Activated CD8-positive, alpha-beta T cell treated with anti-CD3 and anti-CD28 coated beads for 36 hours (primary cell): ENCODE measurements at regions of chr13 and their contacts with region 1.

Region 1: GRCh38 chr13:42466123-42466522 is 107.8 kb upstream of the TNFSF11 start:
- DNase-seq: no peak
- ATAC-seq: no peak
- H3K4me3 Mint-ChIP-seq: no peak overlapping the region
- H3K27ac Mint-ChIP-seq: no peak overlapping the region
- H3K4me1 Mint-ChIP-seq: peaks cover 23% of the 10 kb centered on the region
- H3K27me3 Mint-ChIP-seq: no peaks in the 10 kb centered on the region
- CTCF ChIP-seq: no peak

Region 2: DNA sequence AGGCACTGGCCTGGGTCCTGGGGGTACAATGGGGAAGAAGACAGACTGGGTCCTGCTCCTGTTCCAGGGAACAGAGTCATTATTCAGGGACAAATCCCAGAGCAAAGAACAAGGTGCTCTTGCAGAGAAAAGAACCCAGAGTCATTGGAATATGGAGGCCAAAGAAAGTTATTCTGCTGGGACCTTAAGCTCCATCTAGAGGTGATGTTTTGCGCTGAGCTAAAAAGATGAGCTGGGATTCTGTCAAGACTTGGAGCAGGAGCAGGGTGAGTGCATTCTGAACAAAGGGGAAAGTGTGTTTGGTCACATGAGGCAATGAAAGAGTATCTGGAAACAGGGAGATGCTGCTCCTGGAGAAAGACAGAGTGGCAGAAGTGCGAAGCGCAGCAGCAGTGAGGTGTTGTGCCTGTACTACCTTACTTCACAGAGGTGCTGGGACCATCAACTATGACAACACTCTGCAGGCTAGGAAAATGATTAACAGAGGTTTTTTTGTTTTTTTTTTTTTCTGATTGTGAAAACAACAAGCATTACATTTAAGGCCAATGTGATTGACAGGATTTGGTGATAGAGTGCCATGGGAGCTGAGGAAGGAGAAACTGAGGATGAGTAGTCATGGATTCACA is 12.5 kb after region 1 on chr13:
- CTCF ChIA-PET with region 1: interaction called, 10 read pairs
- POLR2A ChIA-PET with region 1: interaction called, 3 read pairs
- intact Hi-C with region 1: no loop called
- DNase-seq: no peak
- ATAC-seq: no peak
- H3K4me3 Mint-ChIP-seq: no peak overlapping the region
- H3K27ac Mint-ChIP-seq: no peak overlapping the region
- H3K4me1 Mint-ChIP-seq: peaks cover 24% of the 10 kb centered on the region
- H3K27me3 Mint-ChIP-seq: no peaks in the 10 kb centered on the region
- CTCF ChIP-seq: peak; percentile 27